HAP-1 (cell line): ENCODE measurements at regions of chr7 and their contacts with region 1.

Region 1: DNA sequence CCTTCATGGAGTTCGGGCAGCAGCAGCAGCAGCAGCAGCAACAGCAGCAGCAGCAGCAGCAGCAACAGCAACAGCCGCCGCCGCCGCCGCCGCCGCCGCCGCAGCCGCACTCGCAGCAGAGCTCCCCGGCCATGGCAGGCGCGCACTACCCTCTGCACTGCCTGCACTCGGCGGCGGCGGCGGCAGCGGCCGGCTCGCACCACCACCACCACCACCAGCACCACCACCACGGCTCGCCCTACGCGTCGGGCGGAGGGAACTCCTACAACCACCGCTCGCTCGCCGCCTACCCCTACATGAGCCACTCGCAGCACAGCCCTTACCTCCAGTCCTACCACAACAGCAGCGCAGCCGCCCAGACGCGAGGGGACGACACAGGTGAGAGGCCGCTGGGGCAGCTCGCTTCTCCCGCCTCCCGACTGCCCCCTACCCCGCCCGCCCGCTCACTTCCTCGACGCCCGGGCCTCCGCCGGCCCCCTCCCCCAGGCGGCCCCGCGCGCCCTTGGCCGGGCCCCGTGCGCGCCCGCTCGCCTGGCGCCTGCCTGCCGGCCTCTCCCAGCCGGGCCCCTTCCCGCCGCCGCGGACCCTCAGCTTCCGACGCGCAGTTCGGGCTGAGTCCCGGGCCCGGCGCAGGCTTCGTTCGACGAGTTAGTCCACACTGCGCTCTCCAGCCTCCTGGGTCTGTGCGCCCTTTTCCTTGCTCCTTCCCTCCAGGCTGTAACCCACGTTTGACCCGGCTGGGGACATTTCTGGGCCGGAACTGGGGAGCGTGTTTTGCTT is 873 bp downstream of the DLX6 start:
- DNase-seq: peak; percentile 66 to 70
- H3K4me3 ChIP-seq: peak overlapping the region; percentile 56
- H3K4me1 ChIP-seq: peaks cover 37% of the 10 kb centered on the region
- H3K27me3 ChIP-seq: no peaks in the 10 kb centered on the region

Region 2: DNA sequence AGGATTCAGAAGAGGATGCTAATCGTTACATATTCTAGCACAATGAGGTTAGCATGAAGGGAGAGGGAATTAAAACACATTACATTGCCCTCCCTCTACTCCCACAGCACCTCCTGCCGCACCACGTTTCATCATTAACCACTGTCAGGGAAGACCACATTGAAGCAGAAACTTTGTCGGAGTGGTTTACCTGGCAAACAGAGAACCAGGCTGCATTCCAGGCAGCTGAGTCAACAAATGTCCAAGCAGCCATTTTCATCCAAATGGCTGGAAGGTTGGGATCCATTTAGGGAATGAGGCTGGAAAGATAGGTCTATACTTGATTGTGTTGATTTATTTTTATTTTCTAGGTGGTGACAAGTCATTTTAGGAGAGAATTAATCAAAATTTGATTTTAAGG is 960.3 kb before region 1 on chr7:
- in situ Hi-C with region 1: no loop called
- DNase-seq: no peak
- H3K4me3 ChIP-seq: no peak overlapping the region
- H3K4me1 ChIP-seq: no peaks in the 10 kb centered on the region
- H3K27me3 ChIP-seq: no peaks in the 10 kb centered on the region

Region 3: GRCh38 chr7:96709381-96710228 is 296.6 kb before region 1 on chr7 and contains the start of gene SEM1:
- in situ Hi-C with region 1: loop called (anchors 25 kb)
- DNase-seq: peak; percentile 78 to 86
- H3K4me3 ChIP-seq: peak within 1 kb of the TSS; percentile 71
- H3K4me1 ChIP-seq: peaks cover 19% of the 10 kb centered on the region
- H3K27me3 ChIP-seq: no peaks in the 10 kb centered on the region

Region 4: DNA sequence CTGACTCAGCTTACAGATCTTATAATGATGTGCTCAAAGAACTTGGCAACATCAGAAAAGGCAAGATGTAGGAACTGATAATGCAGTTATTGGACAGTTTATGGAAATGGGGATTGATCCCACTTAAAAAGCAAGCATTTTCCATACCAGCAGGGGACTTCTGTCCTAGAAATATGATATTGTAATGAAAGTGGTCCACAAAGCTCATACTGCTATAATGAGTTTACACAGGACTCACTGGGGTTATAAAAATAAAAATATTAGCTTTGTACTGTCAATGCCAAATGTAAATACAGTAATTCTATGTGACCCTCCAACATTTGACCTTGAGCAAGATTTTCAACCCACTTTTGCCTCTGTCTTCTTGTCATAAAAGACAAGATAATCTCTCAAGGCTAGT is 151.1 kb before region 1 on chr7:
- in situ Hi-C with region 1: no loop called
- DNase-seq: no peak
- H3K4me3 ChIP-seq: no peak overlapping the region
- H3K4me1 ChIP-seq: peaks cover 9% of the 10 kb centered on the region
- H3K27me3 ChIP-seq: no peaks in the 10 kb centered on the region